CD14-positive monocyte (primary cell): ENCODE measurements at regions of chr2 and their contacts with region 1.

Region 1: DNA sequence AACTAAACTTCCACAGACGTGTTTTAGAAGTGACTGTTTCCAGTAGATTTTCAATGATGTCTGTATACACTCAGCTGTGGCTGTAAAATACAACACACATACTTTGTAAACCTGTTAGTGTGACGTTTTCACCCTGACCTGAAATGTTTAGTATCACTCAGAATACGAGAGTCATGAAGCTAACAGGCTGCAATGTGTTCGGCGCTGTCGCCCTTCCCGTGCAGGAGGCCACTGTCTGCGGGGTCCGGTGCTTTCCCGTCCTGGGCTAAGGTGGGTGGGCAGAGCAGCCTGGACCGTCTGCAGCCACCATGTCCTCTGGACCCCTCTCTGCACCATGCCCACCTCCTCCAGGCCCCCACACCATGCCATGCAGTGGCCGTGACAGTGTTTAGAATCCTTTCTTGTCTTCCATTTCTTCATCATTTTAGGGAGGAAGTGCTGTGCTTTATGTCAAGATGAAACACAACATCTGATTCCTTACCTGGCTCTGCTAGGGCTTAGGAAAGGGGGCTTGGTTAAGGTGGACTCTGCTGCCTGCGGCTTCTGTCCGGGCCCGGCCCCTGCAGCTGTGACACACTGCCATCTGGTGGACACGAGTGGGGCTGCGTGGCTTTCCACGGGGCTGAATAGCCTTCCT is 53.8 kb upstream of the RBM44 start:
- DNase-seq: peak; percentile 59 to 61 (median 61)
- H3K4me3 ChIP-seq: no peak overlapping the region
- H3K4me3 Mint-ChIP-seq: no peak overlapping the region
- H3K27ac ChIP-seq: peak overlapping the region; percentile 5 to 55
- H3K27ac Mint-ChIP-seq: peak overlapping the region in 6 of 7 donors; percentile 30 to 88 (median 73)
- H3K4me1 ChIP-seq: peaks cover 9 to 18% of the 10 kb centered on the region in 2 donors
- H3K4me1 Mint-ChIP-seq: peaks cover 43% of the 10 kb centered on the region
- H3K27me3 ChIP-seq: no peaks in the 10 kb centered on the region
- H3K27me3 Mint-ChIP-seq: no peaks in the 10 kb centered on the region
- CTCF ChIP-seq: peak; percentile 96

Region 2: DNA sequence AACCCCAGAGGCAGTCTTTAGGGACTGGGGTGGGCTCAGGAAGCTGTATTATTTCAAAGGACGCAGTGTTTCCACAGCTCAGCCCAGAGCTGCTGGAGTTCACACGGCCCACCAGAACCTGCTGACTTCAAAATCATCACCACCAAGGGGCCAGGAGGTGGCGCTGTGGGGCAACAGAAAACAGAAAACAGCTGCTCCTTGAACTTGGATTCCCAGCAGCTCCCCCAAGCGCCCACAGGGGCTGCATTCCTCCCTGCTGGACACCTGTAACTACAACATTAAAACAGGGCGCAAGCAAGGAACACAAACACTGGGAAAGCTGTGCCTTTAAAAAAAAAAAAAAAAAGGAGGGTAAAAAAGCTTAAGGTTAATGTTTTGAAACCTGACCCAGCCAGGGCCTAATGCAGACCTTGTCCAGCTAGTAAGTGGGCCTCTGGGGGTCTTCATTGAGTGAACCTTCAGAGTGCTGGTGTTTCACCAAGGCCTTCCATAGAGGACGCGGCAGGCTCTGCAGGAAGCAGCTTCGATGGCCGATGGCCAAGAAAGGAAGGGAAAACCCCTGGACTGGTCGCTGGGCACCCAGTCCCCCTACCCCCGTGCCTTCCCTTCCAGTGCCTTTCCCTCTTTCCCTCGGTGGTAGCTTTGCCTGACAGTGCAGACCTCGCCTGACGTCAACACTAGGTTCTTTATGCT is 231.8 kb before region 1 on chr2:
- intact Hi-C with region 1: loop called in 1 of 2 experiments (anchors 5 kb)
- DNase-seq: peak; percentile 63 to 69 (median 65)
- H3K4me3 ChIP-seq: no peak overlapping the region
- H3K4me3 Mint-ChIP-seq: no peak overlapping the region
- H3K27ac ChIP-seq: no peak overlapping the region
- H3K27ac Mint-ChIP-seq: peak overlapping the region in 1 of 7 donors; percentile 70
- H3K4me1 ChIP-seq: no peaks in the 10 kb centered on the region
- H3K4me1 Mint-ChIP-seq: no peaks in the 10 kb centered on the region
- H3K27me3 ChIP-seq: no peaks in the 10 kb centered on the region
- H3K27me3 Mint-ChIP-seq: peaks cover 9 to 10% (median 10%) of the 10 kb centered on the region in 3 donors
- CTCF ChIP-seq: peak; percentile 86

Region 3: GRCh38 chr2:237581751-237582746 is 162.7 kb before region 1 on chr2:
- intact Hi-C with region 1: loop called in 1 of 2 experiments (anchors 5 kb)
- DNase-seq: peak; percentile 20 to 41 (median 31)
- H3K4me3 ChIP-seq: no peak overlapping the region
- H3K4me3 Mint-ChIP-seq: no peak overlapping the region
- H3K27ac ChIP-seq: no peak overlapping the region
- H3K27ac Mint-ChIP-seq: peak overlapping the region in 1 of 7 donors; percentile 46
- H3K4me1 ChIP-seq: no peaks in the 10 kb centered on the region
- H3K4me1 Mint-ChIP-seq: no peaks in the 10 kb centered on the region
- H3K27me3 ChIP-seq: no peaks in the 10 kb centered on the region
- H3K27me3 Mint-ChIP-seq: peaks cover 0 to 4% (median 2%) of the 10 kb centered on the region in 3 donors
- CTCF ChIP-seq: peak; percentile 53

Region 4: GRCh38 chr2:237596520-237596860 is 148.2 kb before region 1 on chr2:
- intact Hi-C with region 1: loop called in 1 of 2 experiments (anchors 5 kb)
- DNase-seq: no peak
- H3K4me3 ChIP-seq: no peak overlapping the region
- H3K4me3 Mint-ChIP-seq: no peak overlapping the region
- H3K27ac ChIP-seq: no peak overlapping the region
- H3K27ac Mint-ChIP-seq: peak overlapping the region in 3 of 7 donors; percentile 54 to 76 (median 61)
- H3K4me1 ChIP-seq: peaks cover 7 to 14% of the 10 kb centered on the region in 2 donors
- H3K4me1 Mint-ChIP-seq: peaks cover 24% of the 10 kb centered on the region
- H3K27me3 ChIP-seq: no peaks in the 10 kb centered on the region
- H3K27me3 Mint-ChIP-seq: peaks cover 5 to 14% (median 6%) of the 10 kb centered on the region in 3 donors
- CTCF ChIP-seq: no peak

Region 5: DNA sequence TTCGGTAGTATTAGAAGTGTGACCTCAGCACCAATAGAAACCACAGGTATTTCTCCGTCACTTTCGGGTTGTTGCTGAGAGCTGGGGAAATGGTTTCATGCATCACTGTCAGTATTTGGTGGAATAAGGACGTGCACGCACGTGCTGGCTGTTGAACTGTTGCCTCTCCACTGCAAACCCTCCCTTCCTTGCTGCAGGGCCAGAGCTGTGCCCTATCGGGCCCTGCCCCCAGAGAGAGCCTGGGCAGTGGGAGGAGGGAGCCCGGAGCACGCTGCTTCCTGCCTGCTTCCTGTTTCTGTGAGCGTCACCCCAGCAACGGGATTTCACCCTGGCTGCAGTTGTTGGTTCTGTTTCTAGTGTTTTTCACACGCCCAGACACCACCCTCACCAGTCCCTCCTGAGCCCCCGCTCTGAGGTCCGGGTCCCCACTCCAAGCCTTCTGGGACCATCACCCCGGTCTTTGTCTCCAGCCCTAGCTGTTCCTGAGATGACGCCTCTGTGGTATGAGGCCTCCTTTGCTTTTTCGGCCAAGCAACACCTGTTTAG is 69.9 kb before region 1 on chr2:
- intact Hi-C with region 1: loop called (anchors 5 kb)
- DNase-seq: peak; percentile 95 to 97 (median 96)
- H3K4me3 ChIP-seq: peak overlapping the region; percentile 23 to 75 (median 30)
- H3K4me3 Mint-ChIP-seq: peak overlapping the region; percentile 88 to 96
- H3K27ac ChIP-seq: peak overlapping the region; percentile 91 to 100
- H3K27ac Mint-ChIP-seq: peak overlapping the region; percentile 99 to 100 (median 100)
- H3K4me1 ChIP-seq: peaks cover 76 to 80% of the 10 kb centered on the region in 2 donors
- H3K4me1 Mint-ChIP-seq: peaks cover 82% of the 10 kb centered on the region
- H3K27me3 ChIP-seq: no peaks in the 10 kb centered on the region
- H3K27me3 Mint-ChIP-seq: no peaks in the 10 kb centered on the region
- CTCF ChIP-seq: no peak